BJ (cell line): ENCODE measurements at regions of chr9 and their contacts with region 1.

Region 1: GRCh38 chr9:121059998-121060636 is 10.0 kb upstream of the C5 start:
- DNase-seq: no peak
- H3K4me3 ChIP-seq: no peak overlapping the region
- H3K27me3 ChIP-seq: no peaks in the 10 kb centered on the region
- CTCF ChIP-seq: peak; percentile 77

Region 2: DNA sequence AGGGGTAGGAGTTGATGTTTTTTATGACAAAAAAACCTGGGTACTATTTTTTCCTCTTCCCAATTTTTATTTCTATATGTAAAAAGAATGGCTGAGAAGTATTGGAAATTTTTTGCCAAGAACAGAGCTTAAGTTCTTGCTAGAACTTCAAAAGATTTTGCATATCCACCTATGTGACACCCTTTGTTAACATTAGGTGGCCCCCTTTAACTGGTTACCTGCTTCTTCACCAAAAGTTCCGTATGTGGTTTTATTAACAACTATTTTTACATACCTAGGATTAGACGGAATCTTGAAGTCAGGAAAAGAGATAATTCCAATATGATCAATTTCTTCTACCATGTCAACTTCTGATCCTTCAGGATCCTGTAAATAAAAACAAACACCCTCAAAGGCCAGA is 25.6 kb before region 1 on chr9:
- CTCF ChIA-PET with region 1: interaction called, 12 read pairs
- POLR2A ChIA-PET with region 1: no interaction called
- DNase-seq: no peak
- H3K4me3 ChIP-seq: no peak overlapping the region
- H3K27me3 ChIP-seq: no peaks in the 10 kb centered on the region
- CTCF ChIP-seq: no peak

Region 3: GRCh38 chr9:121048618-121049017 is 11.5 kb before region 1 on chr9:
- CTCF ChIA-PET with region 1: interaction called, 34 read pairs
- POLR2A ChIA-PET with region 1: no interaction called
- DNase-seq: no peak
- H3K4me3 ChIP-seq: no peak overlapping the region
- H3K27me3 ChIP-seq: no peaks in the 10 kb centered on the region
- CTCF ChIP-seq: no peak

Region 4: DNA sequence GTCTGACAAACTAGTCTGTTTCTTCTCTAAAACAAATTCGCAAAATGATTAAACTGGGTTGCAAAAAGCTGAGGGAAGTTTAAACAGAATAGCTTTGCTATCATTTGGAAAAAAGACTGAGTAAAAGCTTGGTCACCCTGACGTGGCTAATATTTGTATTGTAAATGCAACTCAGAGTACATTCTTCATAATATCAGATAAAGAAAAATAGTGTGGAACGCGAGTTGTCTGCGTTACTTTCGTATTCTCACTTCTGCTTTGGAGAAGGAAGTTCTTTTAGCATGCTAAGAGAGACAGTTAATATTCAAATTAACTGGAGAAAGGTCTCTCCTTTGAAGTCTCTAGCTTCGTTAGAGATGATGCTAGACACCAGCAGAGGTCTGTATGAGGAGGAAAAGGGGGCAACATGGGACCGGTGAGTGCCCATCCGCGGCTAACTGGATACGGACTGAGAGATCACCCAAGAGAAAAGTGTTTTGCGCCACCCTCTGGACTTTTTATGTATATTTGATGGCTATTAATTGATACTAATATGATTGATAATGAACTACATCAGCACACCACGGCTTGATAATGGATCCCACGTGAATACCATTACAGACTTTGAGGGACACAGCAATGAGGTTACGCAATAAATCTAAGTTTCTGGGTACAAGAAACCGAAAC is 11.8 kb after region 1 on chr9:
- CTCF ChIA-PET with region 1: interaction called, 38 read pairs
- POLR2A ChIA-PET with region 1: no interaction called
- DNase-seq: no peak
- H3K4me3 ChIP-seq: peak overlapping the region; percentile 35
- H3K27me3 ChIP-seq: no peaks in the 10 kb centered on the region
- CTCF ChIP-seq: peak; percentile 36